A549 (cell line): ENCODE measurements at regions of chr20 and their contacts with region 1.

Region 1: GRCh38 chr20:22339091-22339881 is 245.1 kb downstream of the FOXA2 start:
- DNase-seq: peak; percentile 60 to 91
- ATAC-seq: peak; percentile 71 to 86; a peak in 5 of 6 replicates
- H3K4me3 ChIP-seq: no peak overlapping the region
- H3K27ac ChIP-seq: peak overlapping the region; percentile 63 to 65; a peak in 4 of 6 replicates
- H3K4me1 ChIP-seq: peaks cover 25% of the 10 kb centered on the region
- CTCF ChIP-seq: peak; percentile 98
- EP300 ChIP-seq: no peak
- POLR2A ChIP-seq: no peak
- RAD21 ChIP-seq: peak; percentile 100

Region 2: DNA sequence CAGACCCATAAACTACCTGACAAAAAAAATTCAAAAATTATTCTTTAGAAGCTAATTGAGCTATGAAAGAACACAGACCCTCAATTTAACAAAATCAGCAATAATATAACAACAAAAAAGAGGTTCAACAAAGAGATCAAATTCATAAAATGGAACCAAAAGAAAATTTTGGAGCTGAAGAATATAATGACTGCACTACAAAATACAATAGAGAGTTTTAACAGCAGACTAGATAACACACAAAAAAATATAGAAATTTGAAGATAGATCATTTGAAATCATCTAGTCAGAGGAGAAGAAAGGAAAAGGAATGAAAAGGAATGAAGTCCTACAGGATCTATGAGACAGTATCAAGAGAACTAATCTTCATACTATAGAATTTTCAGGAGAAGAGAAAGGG is 211.7 kb before region 1 on chr20:
- CTCF ChIA-PET with region 1: no interaction called
- POLR2A ChIA-PET with region 1: no interaction called
- DNase-seq: no peak
- ATAC-seq: no peak
- H3K4me3 ChIP-seq: no peak overlapping the region
- H3K27ac ChIP-seq: no peak overlapping the region
- H3K4me1 ChIP-seq: no peaks in the 10 kb centered on the region
- CTCF ChIP-seq: no peak
- EP300 ChIP-seq: no peak
- POLR2A ChIP-seq: no peak
- RAD21 ChIP-seq: no peak

Region 3: DNA sequence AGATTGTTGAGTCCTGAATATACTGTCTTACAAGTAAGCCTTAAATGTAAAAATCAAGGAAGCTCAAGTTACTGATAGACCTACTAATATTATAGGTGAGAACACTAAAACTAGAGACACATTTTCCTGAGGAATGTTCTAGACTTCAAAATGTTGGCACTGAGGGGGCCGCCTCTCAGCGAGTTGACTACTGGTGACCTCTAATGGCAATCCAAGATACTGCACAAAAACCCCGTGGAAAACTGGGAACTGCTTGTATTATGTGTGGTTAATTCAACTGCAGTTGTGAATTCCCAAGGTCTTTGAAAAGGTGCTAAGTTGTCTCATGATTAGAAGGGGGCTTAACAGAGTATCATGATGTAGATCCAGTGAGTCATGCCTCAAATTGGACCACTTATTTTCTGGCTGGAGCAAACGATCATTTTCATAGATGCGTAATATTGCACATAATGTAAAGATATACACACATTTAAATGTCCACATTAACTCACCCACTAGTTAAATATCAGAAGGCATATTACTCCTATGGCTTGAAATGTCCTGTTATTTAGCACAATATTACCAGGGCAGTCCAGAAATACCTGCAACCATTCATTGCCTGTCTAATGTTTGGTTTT is 91.1 kb before region 1 on chr20:
- CTCF ChIA-PET with region 1: no interaction called
- POLR2A ChIA-PET with region 1: no interaction called
- DNase-seq: peak; percentile 24 to 26
- ATAC-seq: peak in 1 of 2 experiments; percentile 70; a peak in 3 of 6 replicates
- H3K4me3 ChIP-seq: no peak overlapping the region
- H3K27ac ChIP-seq: no peak overlapping the region
- H3K4me1 ChIP-seq: no peaks in the 10 kb centered on the region
- CTCF ChIP-seq: peak; percentile 60
- EP300 ChIP-seq: no peak
- POLR2A ChIP-seq: no peak
- RAD21 ChIP-seq: peak; percentile 59 to 67

Region 4: GRCh38 chr20:22385602-22386305 is 46.5 kb after region 1 on chr20:
- CTCF ChIA-PET with region 1: interaction called, 49 read pairs
- POLR2A ChIA-PET with region 1: no interaction called
- DNase-seq: peak; percentile 64 to 74
- ATAC-seq: peak; percentile 73 to 89; a peak in 5 of 6 replicates
- H3K4me3 ChIP-seq: no peak overlapping the region
- H3K27ac ChIP-seq: peak overlapping the region; percentile 57 to 67
- H3K4me1 ChIP-seq: peaks cover 54% of the 10 kb centered on the region
- CTCF ChIP-seq: peak; percentile 90
- EP300 ChIP-seq: no peak
- POLR2A ChIP-seq: no peak
- RAD21 ChIP-seq: peak; percentile 99 to 100

Region 5: DNA sequence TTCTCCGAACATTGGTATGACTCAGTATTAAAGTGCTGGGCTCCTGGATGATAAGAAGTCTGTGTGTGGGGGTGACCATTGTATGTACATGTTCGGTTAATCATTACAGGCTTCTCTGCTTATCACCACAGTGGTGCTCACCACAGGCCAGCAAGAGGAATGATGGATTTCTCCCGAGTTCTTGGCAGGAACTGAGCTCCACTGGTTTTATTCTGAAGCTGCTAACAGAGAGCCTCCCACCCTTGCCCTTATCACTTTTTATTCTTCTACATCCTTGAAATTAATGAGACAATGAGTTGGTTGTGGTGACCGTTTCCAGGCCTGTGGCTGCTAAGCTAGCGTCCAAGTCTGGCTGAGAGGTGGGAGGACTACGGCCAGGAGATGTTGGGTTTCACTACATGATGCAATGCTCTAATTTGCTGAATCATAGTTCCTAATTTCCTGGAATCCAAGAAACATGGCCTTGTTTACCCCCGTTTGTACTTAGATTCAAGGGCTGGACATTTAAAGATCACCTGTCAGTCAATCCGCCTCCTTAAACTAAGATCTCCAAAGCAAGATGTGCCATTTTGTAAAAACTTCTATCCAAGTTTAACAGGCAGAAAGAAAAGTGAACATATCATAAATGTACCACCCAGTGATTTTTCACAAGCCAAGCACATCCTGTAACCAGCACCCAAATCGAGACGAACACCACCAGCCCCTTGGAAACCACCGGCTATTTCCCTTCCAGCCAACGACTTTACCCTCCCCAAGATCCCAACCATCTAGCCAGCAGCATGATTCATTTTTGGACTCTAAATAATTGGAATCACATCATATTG is 72.6 kb after region 1 on chr20:
- CTCF ChIA-PET with region 1: interaction called, 12 read pairs
- POLR2A ChIA-PET with region 1: no interaction called
- DNase-seq: peak; percentile 97 to 99
- ATAC-seq: peak; percentile 96 to 98
- H3K4me3 ChIP-seq: 0 out of 3 replicates have a peak overlapping the region, but pooled peaks have one; percentile 12
- H3K27ac ChIP-seq: peak overlapping the region; percentile 97 to 98
- H3K4me1 ChIP-seq: peaks cover 62% of the 10 kb centered on the region
- CTCF ChIP-seq: no peak
- EP300 ChIP-seq: peak; percentile 76 to 91
- POLR2A ChIP-seq: no peak
- RAD21 ChIP-seq: peak; percentile 44 to 52; a peak in 4 of 5 replicates

Region 6: DNA sequence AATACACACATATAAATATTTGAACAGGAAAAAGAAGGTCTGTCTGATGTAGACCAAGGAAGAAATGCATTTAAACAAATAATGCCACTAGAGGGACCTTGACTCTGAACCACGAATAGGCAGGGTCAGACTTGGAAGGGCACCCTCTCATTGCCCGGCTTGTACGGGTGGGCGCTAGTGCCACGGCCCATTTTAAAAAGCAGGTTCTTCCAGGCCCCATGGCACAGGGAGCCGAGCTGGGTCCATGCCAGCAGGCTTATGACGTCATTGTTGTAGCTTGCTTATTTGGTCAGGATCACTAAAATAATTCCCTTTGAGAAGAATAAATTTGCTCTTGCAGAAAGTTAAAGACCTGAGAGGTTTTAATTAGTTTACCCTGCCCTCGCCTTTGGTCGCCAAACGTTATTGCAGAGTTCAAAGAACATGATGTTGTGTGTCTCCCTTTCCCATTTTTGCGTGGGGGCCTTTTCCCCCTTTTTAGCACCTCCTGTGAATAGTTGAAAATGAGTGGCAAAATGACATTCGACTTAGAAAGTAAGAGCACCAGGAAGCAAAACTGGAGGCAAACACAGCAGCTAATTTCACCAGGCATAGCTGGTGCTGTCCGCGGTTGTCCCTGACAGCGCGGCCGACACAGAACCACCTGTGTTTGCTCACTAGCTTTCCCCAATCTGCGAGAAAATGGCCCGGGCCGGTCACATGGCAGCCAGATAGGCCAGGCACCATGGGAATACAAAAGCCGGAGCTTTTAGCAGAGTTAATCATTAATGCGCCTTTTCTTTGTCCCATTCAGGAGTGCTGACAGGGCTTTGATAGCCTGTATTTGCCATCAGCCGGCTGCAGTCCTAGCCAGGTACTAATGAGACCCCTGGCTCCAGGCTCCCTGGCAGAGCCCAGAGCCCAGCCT is 151.3 kb after region 1 on chr20:
- CTCF ChIA-PET with region 1: interaction called, 34 read pairs
- POLR2A ChIA-PET with region 1: no interaction called
- DNase-seq: peak; percentile 91 to 94
- ATAC-seq: peak; percentile 92 to 94
- H3K4me3 ChIP-seq: peak overlapping the region; percentile 24
- H3K27ac ChIP-seq: peak overlapping the region; percentile 78 to 85
- H3K4me1 ChIP-seq: peaks cover 33% of the 10 kb centered on the region
- CTCF ChIP-seq: peak; percentile 51
- EP300 ChIP-seq: peak in 1 of 2 experiments; percentile 31; a peak in 1 of 5 replicates
- POLR2A ChIP-seq: 0 out of 2 replicates have a peak, but pooled peaks have one; percentile 12
- RAD21 ChIP-seq: peak; percentile 62

Region 7: GRCh38 chr20:22601361-22602141 is 262.3 kb after region 1 on chr20:
- CTCF ChIA-PET with region 1: interaction called, 12 read pairs
- POLR2A ChIA-PET with region 1: no interaction called
- DNase-seq: peak; percentile 51 to 70
- ATAC-seq: peak; percentile 87 to 89
- H3K4me3 ChIP-seq: no peak overlapping the region
- H3K27ac ChIP-seq: peak overlapping the region; percentile 50 to 56; a peak in 5 of 6 replicates
- H3K4me1 ChIP-seq: peaks cover 22% of the 10 kb centered on the region
- CTCF ChIP-seq: no peak
- EP300 ChIP-seq: no peak
- POLR2A ChIP-seq: no peak
- RAD21 ChIP-seq: no peak

Region 8: GRCh38 chr20:22684072-22684762 is 344.9 kb after region 1 on chr20:
- CTCF ChIA-PET with region 1: interaction called, 311 read pairs
- POLR2A ChIA-PET with region 1: no interaction called
- DNase-seq: peak; percentile 71 to 85
- ATAC-seq: peak; percentile 76 to 92
- H3K4me3 ChIP-seq: no peak overlapping the region
- H3K27ac ChIP-seq: peak overlapping the region; percentile 41 to 66; a peak in 5 of 6 replicates
- H3K4me1 ChIP-seq: peaks cover 30% of the 10 kb centered on the region
- CTCF ChIP-seq: peak; percentile 98
- EP300 ChIP-seq: no peak
- POLR2A ChIP-seq: no peak
- RAD21 ChIP-seq: peak; percentile 100

Region 9: GRCh38 chr20:23622839-23623343 is 1283.6 kb after region 1 on chr20:
- CTCF ChIA-PET with region 1: no interaction called
- POLR2A ChIA-PET with region 1: no interaction called
- DNase-seq: peak; percentile 80 to 95
- ATAC-seq: peak; percentile 97 to 99
- H3K4me3 ChIP-seq: peak overlapping the region; percentile 31
- H3K27ac ChIP-seq: peak overlapping the region; percentile 74 to 92
- H3K4me1 ChIP-seq: peaks cover 26% of the 10 kb centered on the region
- CTCF ChIP-seq: no peak
- EP300 ChIP-seq: no peak
- POLR2A ChIP-seq: 0 out of 2 replicates have a peak, but pooled peaks have one; percentile 19
- RAD21 ChIP-seq: 0 out of 5 replicates have a peak, but pooled peaks of 1 of the 2 experiments have one; percentile 9